ENCODE measurements at regions of chr6 and their contacts with region 1.

Region 1: GRCh38 chr6:1589208-1589607 is 20.5 kb upstream of the FOXC1 start:
- DNase-seq: no peak
- ATAC-seq: no peak
- H3K4me3 ChIP-seq: no peak overlapping the region
- H3K27ac ChIP-seq: no peak overlapping the region
- H3K4me1 ChIP-seq: no peaks in the 10 kb centered on the region
- H3K27me3 ChIP-seq: peaks cover 0 to 1% of the 10 kb centered on the region in 2 experiments; a peak in 1 of 4 replicates
- CTCF ChIP-seq: no peak
- EP300 ChIP-seq: no peak
- POLR2A ChIP-seq: no peak
- RAD21 ChIP-seq: no peak

Region 2: GRCh38 chr6:1709234-1709641 is 120.0 kb after region 1 on chr6:
- CTCF ChIA-PET with region 1: no interaction called
- POLR2A ChIA-PET with region 1: no interaction called
- RAD21 ChIA-PET with region 1: no interaction called
- SMC1A ChIA-PET with region 1: no interaction called
- in situ Hi-C with region 1: no loop called
- intact Hi-C with region 1: no loop called
- DNase-seq: no peak
- ATAC-seq: no peak
- H3K4me3 ChIP-seq: no peak overlapping the region
- H3K27ac ChIP-seq: no peak overlapping the region
- H3K4me1 ChIP-seq: peaks cover 6% of the 10 kb centered on the region
- H3K27me3 ChIP-seq: no peaks in the 10 kb centered on the region
- CTCF ChIP-seq: no peak
- EP300 ChIP-seq: no peak
- POLR2A ChIP-seq: no peak
- RAD21 ChIP-seq: no peak

Region 3: DNA sequence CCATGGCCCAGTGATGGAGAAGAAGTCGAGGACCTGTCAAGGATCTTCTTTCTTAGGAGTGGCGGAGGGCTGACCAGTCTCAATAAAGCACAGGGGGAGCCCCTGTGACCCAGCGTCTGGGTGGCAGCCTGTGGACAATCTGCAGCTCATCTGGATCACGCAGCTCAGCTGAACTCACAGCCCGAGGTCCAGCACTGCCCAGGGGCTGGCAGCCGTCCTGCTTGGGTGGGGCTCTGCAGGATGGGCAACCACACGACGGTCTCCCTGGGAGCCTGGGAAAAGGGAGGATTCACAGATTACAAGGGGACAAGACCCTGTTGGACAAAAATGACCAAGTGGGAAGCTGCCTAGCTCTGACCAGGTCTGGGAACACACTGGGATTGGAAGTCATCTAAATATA is 1050.7 kb after region 1 on chr6:
- CTCF ChIA-PET with region 1: interaction called, 8 read pairs
- POLR2A ChIA-PET with region 1: no interaction called
- RAD21 ChIA-PET with region 1: no interaction called
- SMC1A ChIA-PET with region 1: no interaction called
- in situ Hi-C with region 1: loop called (anchors 5 kb)
- intact Hi-C with region 1: no loop called
- DNase-seq: no peak
- ATAC-seq: no peak
- H3K4me3 ChIP-seq: no peak overlapping the region
- H3K27ac ChIP-seq: no peak overlapping the region
- H3K4me1 ChIP-seq: peaks cover 13% of the 10 kb centered on the region
- H3K27me3 ChIP-seq: peaks cover 3 to 6% of the 10 kb centered on the region in 2 experiments; a peak in 3 of 4 replicates
- CTCF ChIP-seq: no peak
- EP300 ChIP-seq: no peak
- POLR2A ChIP-seq: no peak
- RAD21 ChIP-seq: no peak